MCF 10A (cell line): ENCODE measurements at regions of chr4 and their contacts with region 1.

Region 1: GRCh38 chr4:140308366-140309123 is 64.9 kb upstream of the SCOC start:
- DNase-seq: peak; percentile 91
- H3K4me3 Mint-ChIP-seq: peak overlapping the region; percentile 59
- H3K27ac Mint-ChIP-seq: peak overlapping the region; percentile 54
- H3K4me1 Mint-ChIP-seq: peaks cover 49% of the 10 kb centered on the region
- H3K27me3 Mint-ChIP-seq: no peaks in the 10 kb centered on the region
- CTCF ChIP-seq: no peak

Region 2: GRCh38 chr4:139453371-139454110 is 855.0 kb before region 1 on chr4:
- CTCF ChIA-PET with region 1: no interaction called
- POLR2A ChIA-PET with region 1: no interaction called
- intact Hi-C with region 1: no loop called
- DNase-seq: peak; percentile 98
- H3K4me3 Mint-ChIP-seq: peak overlapping the region; percentile 100
- H3K27ac Mint-ChIP-seq: peak overlapping the region; percentile 97
- H3K4me1 Mint-ChIP-seq: peaks cover 45% of the 10 kb centered on the region
- H3K27me3 Mint-ChIP-seq: no peaks in the 10 kb centered on the region
- CTCF ChIP-seq: no peak

Region 3: DNA sequence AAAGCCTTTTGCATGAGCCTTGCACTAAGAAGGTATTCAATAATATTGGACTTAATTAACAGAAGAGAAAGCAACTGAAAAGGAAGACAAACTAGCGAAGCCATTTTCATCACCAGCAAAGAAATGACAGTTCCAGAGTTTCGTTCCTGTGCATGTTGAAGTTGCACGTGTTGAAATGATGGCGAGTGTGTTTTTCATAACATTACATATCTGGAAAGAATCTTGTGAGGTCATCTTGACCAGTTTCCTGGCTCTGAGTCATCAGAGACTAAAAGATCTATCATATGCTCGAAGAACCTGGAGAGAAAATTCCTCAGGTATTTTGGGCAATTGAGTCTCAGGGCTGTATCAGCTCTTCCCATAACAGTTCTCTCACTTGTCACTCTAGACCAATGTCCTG is 48.3 kb before region 1 on chr4:
- CTCF ChIA-PET with region 1: interaction called, 6 read pairs
- POLR2A ChIA-PET with region 1: interaction called, 3 read pairs
- intact Hi-C with region 1: loop called (anchors 5 kb)
- DNase-seq: peak; percentile 70
- H3K4me3 Mint-ChIP-seq: no peak overlapping the region
- H3K27ac Mint-ChIP-seq: no peak overlapping the region
- H3K4me1 Mint-ChIP-seq: peaks cover 19% of the 10 kb centered on the region
- H3K27me3 Mint-ChIP-seq: no peaks in the 10 kb centered on the region
- CTCF ChIP-seq: no peak

Region 4: DNA sequence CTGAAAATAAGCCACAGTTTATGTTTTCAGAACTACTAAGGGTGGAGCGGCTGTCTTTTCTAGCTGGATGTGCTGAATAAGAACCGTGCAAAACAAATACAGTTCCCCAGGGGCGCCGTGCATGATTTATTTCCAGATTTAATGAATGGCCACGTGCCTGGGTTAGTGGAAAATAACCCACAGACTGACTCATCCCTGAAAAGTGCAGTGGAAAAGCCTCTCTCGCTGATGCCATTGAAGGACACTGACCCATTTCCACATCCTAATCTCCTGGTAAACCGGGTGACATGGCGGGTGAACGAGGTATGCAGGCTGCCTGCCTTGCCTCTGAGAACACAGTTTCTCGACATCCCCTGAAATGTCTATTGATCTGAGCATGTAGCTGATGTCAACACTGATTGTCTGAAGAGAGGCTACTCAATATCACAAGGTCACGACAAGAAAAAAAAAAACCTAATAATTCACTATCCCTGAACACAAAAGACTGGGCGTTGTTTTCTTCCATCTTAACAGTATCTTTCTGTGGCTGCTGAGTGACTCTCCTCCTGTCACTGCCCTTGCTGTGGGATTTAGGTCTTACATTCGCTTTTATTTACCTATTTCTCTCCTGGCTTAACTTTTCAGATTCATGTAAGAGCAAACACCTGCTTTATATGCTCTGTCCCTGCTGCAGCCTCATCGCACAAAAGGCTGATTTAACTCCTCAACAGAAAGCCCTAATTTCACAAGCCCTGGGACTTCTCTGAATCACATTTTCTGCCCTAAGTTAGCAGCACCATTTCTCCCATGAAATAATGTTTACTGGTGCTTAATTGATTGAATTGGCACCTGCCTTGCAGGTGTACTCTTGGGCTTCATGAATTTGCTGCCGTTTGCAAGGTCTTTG is 12.0 kb before region 1 on chr4:
- CTCF ChIA-PET with region 1: interaction called, 10 read pairs
- POLR2A ChIA-PET with region 1: interaction called, 16 read pairs
- intact Hi-C with region 1: no loop called
- DNase-seq: peak; percentile 58
- H3K4me3 Mint-ChIP-seq: peak overlapping the region; percentile 38
- H3K27ac Mint-ChIP-seq: peak overlapping the region; percentile 11
- H3K4me1 Mint-ChIP-seq: peaks cover 27% of the 10 kb centered on the region
- H3K27me3 Mint-ChIP-seq: no peaks in the 10 kb centered on the region
- CTCF ChIP-seq: no peak